Naive thymus-derived CD8-positive, alpha-beta T cell (primary cell): ENCODE measurements at regions of chr20 and their contacts with region 1.

Region 1: GRCh38 chr20:5119435-5120188 is at the start of gene PCNA:
- DNase-seq: peak; percentile 91 to 97 (median 94)
- ATAC-seq: peak; percentile 91
- H3K4me3 Mint-ChIP-seq: peak within 1 kb of the TSS; percentile 91 to 97 (median 94)
- H3K27ac Mint-ChIP-seq: peak within 1 kb of the TSS; percentile 92 to 99 (median 94)
- H3K4me1 Mint-ChIP-seq: peaks cover 3 to 36% (median 23%) of the 10 kb centered on the region in 4 donors
- H3K27me3 Mint-ChIP-seq: no peaks in the 10 kb centered on the region
- polyA plus RNA-seq, gene PCNA: 41.8 to 57.1 (median 44.6) TPM

Region 2: GRCh38 chr20:3276680-3277015 is 1843.0 kb before region 1 on chr20:
- POLR2A ChIA-PET with region 1: no interaction called
- DNase-seq: no peak
- ATAC-seq: no peak
- H3K4me3 Mint-ChIP-seq: no peak overlapping the region
- H3K27ac Mint-ChIP-seq: peak overlapping the region in 2 of 10 donors; percentile 13 to 28
- H3K4me1 Mint-ChIP-seq: no peaks in the 10 kb centered on the region
- H3K27me3 Mint-ChIP-seq: no peaks in the 10 kb centered on the region

Region 3: GRCh38 chr20:5141615-5142014 is 22.0 kb after region 1 on chr20:
- POLR2A ChIA-PET with region 1: no interaction called
- DNase-seq: no peak
- ATAC-seq: no peak
- H3K4me3 Mint-ChIP-seq: peak overlapping the region in 1 of 10 donors; percentile 34
- H3K27ac Mint-ChIP-seq: no peak overlapping the region
- H3K4me1 Mint-ChIP-seq: peaks cover 29 to 71% (median 66%) of the 10 kb centered on the region in 4 donors
- H3K27me3 Mint-ChIP-seq: no peaks in the 10 kb centered on the region

Region 4: GRCh38 chr20:5168651-5169396 is 49.2 kb after region 1 on chr20:
- POLR2A ChIA-PET with region 1: no interaction called
- DNase-seq: peak in 1 of 10 donors; percentile 12
- ATAC-seq: peak; percentile 57 to 64
- H3K4me3 Mint-ChIP-seq: peak overlapping the region; percentile 13 to 83 (median 70)
- H3K27ac Mint-ChIP-seq: peak overlapping the region; percentile 60 to 96 (median 92)
- H3K4me1 Mint-ChIP-seq: peaks cover 49 to 92% (median 79%) of the 10 kb centered on the region in 4 donors
- H3K27me3 Mint-ChIP-seq: no peaks in the 10 kb centered on the region

Region 5: GRCh38 chr20:5191829-5192569 is 72.4 kb after region 1 on chr20:
- POLR2A ChIA-PET with region 1: interaction called, 12 read pairs
- DNase-seq: peak in 7 of 10 donors; percentile 5 to 59 (median 39)
- ATAC-seq: peak; percentile 66 to 80
- H3K4me3 Mint-ChIP-seq: no peak overlapping the region
- H3K27ac Mint-ChIP-seq: peak overlapping the region in 9 of 10 donors; percentile 44 to 89 (median 82)
- H3K4me1 Mint-ChIP-seq: peaks cover 0 to 3% (median 2%) of the 10 kb centered on the region in 4 donors
- H3K27me3 Mint-ChIP-seq: no peaks in the 10 kb centered on the region